CD14-positive monocyte (primary cell): ENCODE measurements at regions of chr16 and their contacts with region 1.

Region 1: GRCh38 chr16:81077076-81077940 is at the start of gene C16orf46:
- DNase-seq: peak; percentile 92 to 95 (median 94)
- H3K4me3 ChIP-seq: peak within 1 kb of the TSS; percentile 75 to 92 (median 78)
- H3K4me3 Mint-ChIP-seq: no peak within 1 kb of the TSS
- H3K27ac ChIP-seq: peak within 1 kb of the TSS; percentile 76 to 91
- H3K27ac Mint-ChIP-seq: no peak within 1 kb of the TSS
- H3K4me1 ChIP-seq: peaks cover 12 to 13% of the 10 kb centered on the region in 2 donors
- H3K4me1 Mint-ChIP-seq: peaks cover 3% of the 10 kb centered on the region
- H3K27me3 ChIP-seq: no peaks in the 10 kb centered on the region
- H3K27me3 Mint-ChIP-seq: peaks cover 0 to 4% (median 2%) of the 10 kb centered on the region in 3 donors
- CTCF ChIP-seq: no peak
- polyA plus RNA-seq, gene C16orf46: 0.37 to 0.42 TPM in 2 of 3 donors, not detected in the other

Region 2: DNA sequence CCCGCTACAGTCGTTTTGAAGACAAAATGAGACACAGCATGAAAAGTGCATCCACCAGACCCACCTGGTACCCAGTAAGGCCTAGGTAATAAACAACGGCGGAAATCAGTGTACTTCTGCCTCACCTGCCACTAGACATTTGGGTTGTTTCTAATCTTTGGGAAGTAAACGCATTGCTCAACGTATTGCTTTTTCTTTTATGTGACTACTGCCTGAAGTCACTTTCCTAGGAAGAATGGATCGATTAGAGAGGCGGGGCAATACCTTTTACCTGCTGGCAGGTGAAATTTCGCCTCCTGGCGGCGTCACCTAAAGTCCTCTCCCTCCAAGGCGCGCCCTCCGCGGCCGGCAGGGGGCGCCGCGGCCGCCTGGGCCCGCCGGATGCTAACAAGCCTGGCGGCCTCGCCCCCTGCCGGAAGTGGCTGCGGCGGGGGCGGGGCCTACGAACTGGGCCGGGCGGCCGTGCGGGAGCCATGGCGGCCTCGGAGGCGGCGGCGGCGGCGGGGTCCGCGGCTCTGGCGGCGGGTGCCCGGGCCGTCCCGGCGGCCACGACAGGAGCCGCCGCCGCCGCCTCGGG is 41.8 kb before region 1 on chr16 and contains the start of gene ATMIN:
- intact Hi-C with region 1: loop called (anchors 2 kb)
- DNase-seq: peak; percentile 72 to 87 (median 84)
- H3K4me3 ChIP-seq: peak within 1 kb of the TSS; percentile 49 to 84 (median 73)
- H3K4me3 Mint-ChIP-seq: peak within 1 kb of the TSS; percentile 82 to 88
- H3K27ac ChIP-seq: peak within 1 kb of the TSS in 1 of 2 donors; percentile 50
- H3K27ac Mint-ChIP-seq: peak within 1 kb of the TSS in 6 of 7 donors; percentile 56 to 70 (median 62)
- H3K4me1 ChIP-seq: peaks cover 14% of the 10 kb centered on the region in 2 donors
- H3K4me1 Mint-ChIP-seq: peaks cover 23% of the 10 kb centered on the region
- H3K27me3 ChIP-seq: no peaks in the 10 kb centered on the region
- H3K27me3 Mint-ChIP-seq: no peaks in the 10 kb centered on the region
- CTCF ChIP-seq: peak; percentile 95
- polyA plus RNA-seq, gene ATMIN: 10.9 to 17.6 (median 13.2) TPM